CD8-positive, alpha-beta T cell (primary cell): ENCODE measurements at regions of chr3 and their contacts with region 1.

Region 1: DNA sequence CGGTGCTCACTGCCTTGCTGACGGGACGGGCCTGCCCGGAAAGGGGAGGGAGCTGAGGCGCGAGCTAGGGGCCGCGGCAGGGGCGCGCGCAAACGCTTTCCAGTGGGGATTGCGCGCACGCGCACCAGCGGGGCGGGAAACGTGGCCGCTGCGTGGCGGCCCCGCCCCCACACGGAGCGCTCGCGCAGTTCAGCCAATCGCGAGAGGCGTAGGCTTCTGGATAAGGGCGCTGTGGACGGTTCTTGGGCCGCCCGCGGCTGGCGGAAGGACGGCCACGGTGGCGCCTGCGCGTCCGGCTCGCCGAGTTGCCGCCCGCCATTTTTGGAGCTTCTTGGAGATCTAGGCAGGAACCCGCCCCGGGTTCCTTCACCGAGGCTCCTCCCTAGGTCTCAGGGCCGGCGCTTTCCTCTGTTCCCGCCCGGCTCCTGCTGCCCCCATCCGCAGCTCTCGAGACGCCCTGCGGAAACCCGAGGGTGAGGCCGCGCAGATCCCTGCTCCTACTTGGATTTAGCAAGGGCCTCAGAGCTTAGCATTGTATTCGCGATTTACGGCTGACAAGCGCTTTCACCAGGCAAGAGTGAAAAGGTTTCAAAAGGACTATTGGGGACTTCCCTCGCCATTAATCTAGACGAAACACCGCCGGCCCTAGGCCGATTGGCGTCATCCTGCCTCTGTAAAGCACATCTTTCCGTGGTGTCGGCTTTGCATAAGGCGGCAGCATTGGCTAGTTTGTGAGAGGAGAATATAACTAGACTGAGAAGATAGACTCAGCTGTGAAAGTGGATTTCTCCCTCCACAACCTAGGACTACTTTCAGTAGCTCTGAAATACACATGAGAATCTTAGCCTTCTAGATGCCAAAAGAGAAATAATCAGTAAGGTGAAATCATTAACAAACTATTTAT is 496 bp upstream of the STAG1 start:
- DNase-seq: peak; percentile 98 to 99 (median 99)
- ATAC-seq: peak; percentile 81
- H3K4me3 ChIP-seq: peak overlapping the region; percentile 71 to 73
- H3K4me3 Mint-ChIP-seq: peak overlapping the region; percentile 95
- H3K27ac ChIP-seq: peak overlapping the region; percentile 90 to 96
- H3K27ac Mint-ChIP-seq: peak overlapping the region; percentile 91
- H3K4me1 ChIP-seq: peaks cover 37% of the 10 kb centered on the region
- H3K4me1 Mint-ChIP-seq: peaks cover 40% of the 10 kb centered on the region
- H3K27me3 ChIP-seq: no peaks in the 10 kb centered on the region
- H3K27me3 Mint-ChIP-seq: no peaks in the 10 kb centered on the region
- CTCF ChIP-seq: no peak

Region 2: DNA sequence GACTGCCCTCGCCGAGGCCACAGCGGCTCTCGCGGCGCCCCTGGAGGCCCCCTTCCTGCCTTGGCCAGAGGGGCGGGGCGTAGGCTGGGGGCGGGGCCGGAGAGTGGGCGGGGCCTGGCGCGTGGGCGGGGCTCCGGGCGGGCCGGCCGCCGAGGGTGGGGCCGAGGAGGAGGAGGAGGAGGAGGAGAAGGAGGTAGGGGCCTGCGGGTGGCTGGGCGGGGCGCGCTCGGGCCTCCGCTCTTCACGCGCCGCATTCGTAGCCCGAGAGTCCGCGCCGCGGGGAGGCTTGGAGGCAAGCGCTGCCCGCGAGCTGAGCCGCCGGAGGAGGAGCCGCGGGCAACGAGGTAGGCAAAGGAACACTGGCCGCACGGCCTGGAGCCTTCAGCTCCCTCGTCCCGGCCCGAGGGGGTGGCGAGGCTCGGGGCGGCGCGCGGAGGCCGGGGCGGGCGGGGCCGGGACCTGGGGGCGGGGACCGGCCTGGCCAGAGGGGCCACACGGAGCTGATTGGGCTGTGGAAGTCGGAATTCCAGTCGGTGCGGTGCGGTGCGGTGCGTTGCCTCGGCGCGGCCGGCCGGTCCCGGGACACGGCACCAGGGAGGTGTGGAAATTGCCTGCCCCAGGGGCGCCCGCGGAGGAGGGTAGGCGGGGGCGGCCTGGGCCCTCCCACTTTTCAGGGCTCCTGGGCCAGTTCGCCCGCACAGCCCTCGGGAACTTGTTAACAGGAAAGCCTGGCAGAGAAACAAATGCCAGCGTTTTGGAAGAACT is 787.0 kb before region 1 on chr3 and contains the start of gene PPP2R3A:
- CTCF ChIA-PET with region 1: no interaction called
- POLR2A ChIA-PET with region 1: no interaction called
- intact Hi-C with region 1: loop called in 1 of 2 experiments (anchors 10 kb)
- DNase-seq: peak; percentile 40 to 83 (median 61)
- ATAC-seq: peak; percentile 93
- H3K4me3 ChIP-seq: peak within 1 kb of the TSS; percentile 61 to 63
- H3K4me3 Mint-ChIP-seq: peak within 1 kb of the TSS; percentile 81
- H3K27ac ChIP-seq: no peak within 1 kb of the TSS
- H3K27ac Mint-ChIP-seq: peak within 1 kb of the TSS; percentile 25
- H3K4me1 ChIP-seq: peaks cover 10% of the 10 kb centered on the region
- H3K4me1 Mint-ChIP-seq: peaks cover 12% of the 10 kb centered on the region
- H3K27me3 ChIP-seq: peaks cover 0 to 5% of the 10 kb centered on the region in 2 experiments
- H3K27me3 Mint-ChIP-seq: peaks cover 39% of the 10 kb centered on the region
- CTCF ChIP-seq: no peak
- total RNA-seq, gene PPP2R3A: 0.08 to 0.11 TPM

Region 3: DNA sequence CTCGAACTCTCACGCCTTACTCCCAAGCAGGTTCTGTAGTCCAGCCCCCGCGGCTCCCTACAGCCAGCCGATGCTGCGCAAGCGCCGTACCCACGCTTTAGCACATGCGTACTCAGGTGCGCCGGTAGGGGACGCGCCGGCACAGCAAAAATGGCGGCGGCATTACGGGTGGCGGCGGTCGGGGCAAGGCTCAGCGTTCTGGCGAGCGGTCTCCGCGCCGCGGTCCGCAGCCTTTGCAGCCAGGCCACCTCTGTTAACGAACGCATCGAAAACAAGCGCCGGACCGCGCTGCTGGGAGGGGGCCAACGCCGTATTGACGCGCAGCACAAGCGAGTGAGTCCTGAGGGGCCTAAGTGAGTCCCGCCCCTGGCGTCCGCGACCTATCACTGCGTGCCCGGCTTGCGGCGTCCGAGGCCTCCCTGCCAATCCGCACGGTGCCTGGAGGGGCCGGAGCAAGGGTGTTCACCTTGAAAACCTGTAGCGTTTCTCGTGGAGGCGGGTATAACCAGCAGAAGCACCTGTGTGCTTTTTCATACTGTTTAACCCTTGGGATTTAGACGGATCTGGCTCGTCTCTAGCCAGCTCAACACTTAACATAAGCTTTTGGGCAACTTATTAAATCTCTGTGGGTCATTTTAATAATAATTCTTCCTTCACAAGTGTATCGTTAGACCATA is 502.3 kb before region 1 on chr3 and contains the start of gene PCCB:
- CTCF ChIA-PET with region 1: no interaction called
- POLR2A ChIA-PET with region 1: interaction called, 7 read pairs
- intact Hi-C with region 1: loop called (anchors 1 to 2 kb)
- DNase-seq: peak; percentile 84 to 95 (median 90)
- ATAC-seq: peak; percentile 96
- H3K4me3 ChIP-seq: peak within 1 kb of the TSS; percentile 88 to 93
- H3K4me3 Mint-ChIP-seq: peak within 1 kb of the TSS; percentile 94
- H3K27ac ChIP-seq: peak within 1 kb of the TSS; percentile 74 to 89
- H3K27ac Mint-ChIP-seq: peak within 1 kb of the TSS; percentile 85
- H3K4me1 ChIP-seq: peaks cover 16% of the 10 kb centered on the region
- H3K4me1 Mint-ChIP-seq: peaks cover 23% of the 10 kb centered on the region
- H3K27me3 ChIP-seq: no peaks in the 10 kb centered on the region
- H3K27me3 Mint-ChIP-seq: no peaks in the 10 kb centered on the region
- CTCF ChIP-seq: peak; percentile 91
- total RNA-seq, gene PCCB: 12.3 to 15.8 TPM

Region 4: GRCh38 chr3:136545664-136546268 is 206.9 kb before region 1 on chr3:
- CTCF ChIA-PET with region 1: interaction called, 14 read pairs
- POLR2A ChIA-PET with region 1: interaction called, 7 read pairs
- intact Hi-C with region 1: loop called (anchors 2 to 5 kb)
- DNase-seq: peak in 2 of 9 experiments; percentile 7 to 20
- ATAC-seq: no peak
- H3K4me3 ChIP-seq: no peak overlapping the region
- H3K4me3 Mint-ChIP-seq: no peak overlapping the region
- H3K27ac ChIP-seq: no peak overlapping the region
- H3K27ac Mint-ChIP-seq: no peak overlapping the region
- H3K4me1 ChIP-seq: no peaks in the 10 kb centered on the region
- H3K4me1 Mint-ChIP-seq: peaks cover 24% of the 10 kb centered on the region
- H3K27me3 ChIP-seq: no peaks in the 10 kb centered on the region
- H3K27me3 Mint-ChIP-seq: no peaks in the 10 kb centered on the region
- CTCF ChIP-seq: no peak

Region 5: DNA sequence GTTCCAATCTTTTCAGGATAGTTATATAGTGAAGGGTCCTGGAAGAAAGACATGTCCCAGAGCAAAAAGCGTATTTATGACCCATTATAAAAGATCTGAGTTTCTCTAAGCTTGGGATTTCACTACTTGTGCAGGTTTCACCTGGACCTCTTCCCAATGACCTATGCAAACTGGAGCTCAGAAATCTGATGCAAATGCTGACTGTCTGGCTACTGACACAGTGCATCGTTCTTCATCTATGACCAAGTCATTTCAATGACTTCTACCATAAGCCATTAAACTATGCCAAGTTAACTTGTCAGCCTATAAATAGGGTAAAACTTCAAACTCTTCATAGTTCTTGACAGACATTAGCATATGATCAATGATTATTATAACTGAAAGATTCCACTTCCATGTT is 11.6 kb before region 1 on chr3:
- CTCF ChIA-PET with region 1: interaction called, 8 read pairs
- POLR2A ChIA-PET with region 1: interaction called, 11 read pairs
- intact Hi-C with region 1: no loop called
- DNase-seq: no peak
- ATAC-seq: no peak
- H3K4me3 ChIP-seq: no peak overlapping the region
- H3K4me3 Mint-ChIP-seq: no peak overlapping the region
- H3K27ac ChIP-seq: no peak overlapping the region
- H3K27ac Mint-ChIP-seq: no peak overlapping the region
- H3K4me1 ChIP-seq: peaks cover 2% of the 10 kb centered on the region
- H3K4me1 Mint-ChIP-seq: peaks cover 43% of the 10 kb centered on the region
- H3K27me3 ChIP-seq: no peaks in the 10 kb centered on the region
- H3K27me3 Mint-ChIP-seq: no peaks in the 10 kb centered on the region
- CTCF ChIP-seq: no peak

Region 6: GRCh38 chr3:137013955-137014688 is 261.4 kb after region 1 on chr3:
- CTCF ChIA-PET with region 1: interaction called, 127 read pairs
- POLR2A ChIA-PET with region 1: interaction called, 19 read pairs
- intact Hi-C with region 1: loop called (anchors 1 kb)
- DNase-seq: peak; percentile 73 to 93 (median 85)
- ATAC-seq: peak; percentile 84
- H3K4me3 ChIP-seq: peak overlapping the region; percentile 34 to 44
- H3K4me3 Mint-ChIP-seq: peak overlapping the region; percentile 68
- H3K27ac ChIP-seq: no peak overlapping the region
- H3K27ac Mint-ChIP-seq: no peak overlapping the region
- H3K4me1 ChIP-seq: no peaks in the 10 kb centered on the region
- H3K4me1 Mint-ChIP-seq: peaks cover 8% of the 10 kb centered on the region
- H3K27me3 ChIP-seq: no peaks in the 10 kb centered on the region
- H3K27me3 Mint-ChIP-seq: no peaks in the 10 kb centered on the region
- CTCF ChIP-seq: peak; percentile 95